HepG2 (cell line): ENCODE measurements at regions of chr4 and their contacts with region 1.

Region 1: DNA sequence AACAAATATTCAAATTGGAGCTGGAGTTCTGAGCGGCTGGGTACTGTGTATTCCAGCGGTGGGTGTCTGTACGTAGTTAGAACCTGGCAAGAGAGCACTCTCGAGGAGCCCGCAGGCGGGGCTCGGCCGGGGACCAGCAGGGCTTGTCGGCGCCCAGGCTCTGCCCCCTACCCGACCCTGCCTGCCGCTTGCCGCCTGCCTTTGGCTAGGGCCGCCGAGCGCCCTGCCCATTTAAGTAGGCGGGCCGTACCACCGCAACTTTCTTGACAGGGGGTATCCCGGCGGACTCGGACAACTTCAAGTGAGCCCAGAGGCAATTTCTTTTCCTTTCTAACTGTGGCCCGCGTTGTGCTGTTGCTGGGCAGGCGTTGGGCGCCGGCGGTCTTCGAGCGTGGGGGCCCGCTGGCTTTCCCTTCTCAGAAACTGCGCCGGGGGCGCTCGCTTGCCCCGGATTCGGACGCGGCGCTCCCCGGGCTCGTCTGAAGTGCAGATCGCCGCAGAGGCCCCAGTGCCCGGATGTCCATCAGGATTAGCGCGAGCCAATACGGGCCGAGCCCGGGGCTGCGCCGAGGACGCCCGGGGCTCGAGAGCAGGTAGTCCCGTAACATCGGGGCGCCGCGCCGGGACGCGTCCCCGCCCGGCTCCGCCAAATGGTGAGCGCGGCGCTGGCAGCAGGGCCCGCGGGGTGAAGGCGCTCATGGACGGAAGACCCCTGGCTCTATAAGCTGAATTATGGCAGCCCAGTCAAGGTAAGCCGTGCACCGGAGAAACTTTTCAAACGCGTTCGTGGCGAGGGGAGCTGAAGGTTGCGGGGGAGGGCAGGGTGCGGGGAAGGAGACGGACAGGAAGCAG is 72.1 kb downstream of the AFF1 start:
- DNase-seq: peak; percentile 84
- ATAC-seq: peak; percentile 96
- H3K4me3 ChIP-seq: peak overlapping the region; percentile 71 to 85 (median 74)
- H3K27ac ChIP-seq: peak overlapping the region; percentile 99
- H3K4me1 ChIP-seq: peaks cover 71% of the 10 kb centered on the region
- H3K27me3 ChIP-seq: no peaks in the 10 kb centered on the region; a peak in 1 of 5 replicates
- CTCF ChIP-seq: peak; percentile 21; the same call in 1 of the 2 replicates
- EP300 ChIP-seq: peak in 1 of 2 experiments; percentile 12; a peak in 1 of 4 replicates
- POLR2A ChIP-seq: peak; percentile 99
- RAD21 ChIP-seq: peak; percentile 59

Region 2: DNA sequence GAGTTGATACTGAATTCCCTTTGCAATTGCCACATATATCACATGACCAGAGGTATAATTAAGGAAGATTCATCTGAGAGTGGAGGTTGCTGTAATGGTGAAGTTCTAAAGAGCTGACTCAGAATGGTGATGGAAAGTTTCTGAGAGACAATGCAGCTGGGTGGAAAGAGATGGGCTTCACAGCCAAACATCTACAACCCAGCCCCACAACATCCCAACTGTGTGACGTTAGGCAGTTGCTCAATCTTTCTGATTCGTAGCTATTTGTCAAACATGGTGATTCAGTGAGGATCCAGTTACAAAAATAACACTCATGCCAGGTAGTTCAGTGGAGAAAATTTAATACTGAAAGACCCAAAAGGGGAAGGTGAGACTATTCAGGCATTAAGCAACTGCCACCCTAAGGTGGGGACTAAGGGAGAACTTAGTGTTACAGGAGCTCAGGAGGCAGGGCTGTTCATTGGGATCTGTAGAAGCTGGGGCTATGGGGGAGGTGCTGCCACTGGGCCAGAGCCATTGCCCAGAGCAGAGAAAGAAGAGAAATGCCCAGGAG is 79.0 kb before region 1 on chr4:
- CTCF ChIA-PET with region 1: interaction called, 5 read pairs
- POLR2A ChIA-PET with region 1: interaction called, 17 read pairs
- in situ Hi-C with region 1: no loop called
- intact Hi-C with region 1: no loop called
- DNase-seq: peak; percentile 87
- ATAC-seq: peak; percentile 74
- H3K4me3 ChIP-seq: no peak overlapping the region
- H3K27ac ChIP-seq: no peak overlapping the region
- H3K4me1 ChIP-seq: peaks cover 21% of the 10 kb centered on the region
- H3K27me3 ChIP-seq: no peaks in the 10 kb centered on the region
- CTCF ChIP-seq: no peak
- EP300 ChIP-seq: peak in 1 of 2 experiments; percentile 60; a peak in 1 of 4 replicates
- POLR2A ChIP-seq: no peak
- RAD21 ChIP-seq: no peak

Region 3: GRCh38 chr4:86942185-86942666 is 64.7 kb before region 1 on chr4:
- CTCF ChIA-PET with region 1: no interaction called
- POLR2A ChIA-PET with region 1: interaction called, 35 read pairs
- in situ Hi-C with region 1: loop called (anchors 5 kb)
- intact Hi-C with region 1: no loop called
- DNase-seq: peak; percentile 62
- ATAC-seq: peak; percentile 63
- H3K4me3 ChIP-seq: no peak overlapping the region
- H3K27ac ChIP-seq: peak overlapping the region; percentile 43
- H3K4me1 ChIP-seq: peaks cover 92% of the 10 kb centered on the region
- H3K27me3 ChIP-seq: no peaks in the 10 kb centered on the region
- CTCF ChIP-seq: no peak
- EP300 ChIP-seq: peak in 1 of 2 experiments; percentile 44; a peak in 1 of 4 replicates
- POLR2A ChIP-seq: no peak
- RAD21 ChIP-seq: no peak

Region 4: GRCh38 chr4:86977621-86978184 is 29.2 kb before region 1 on chr4:
- CTCF ChIA-PET with region 1: no interaction called
- POLR2A ChIA-PET with region 1: interaction called, 30 read pairs
- in situ Hi-C with region 1: no loop called
- intact Hi-C with region 1: loop called (anchors 1 kb)
- DNase-seq: peak; percentile 96
- ATAC-seq: peak; percentile 97
- H3K4me3 ChIP-seq: peak overlapping the region in 1 of 3 experiments; percentile 28; a peak in 1 of 6 replicates
- H3K27ac ChIP-seq: peak overlapping the region; percentile 94
- H3K4me1 ChIP-seq: peaks cover 75% of the 10 kb centered on the region
- H3K27me3 ChIP-seq: no peaks in the 10 kb centered on the region
- CTCF ChIP-seq: no peak
- EP300 ChIP-seq: peak in 1 of 2 experiments; percentile 90; a peak in 2 of 4 replicates
- POLR2A ChIP-seq: no peak
- RAD21 ChIP-seq: no peak

Region 5: GRCh38 chr4:87044511-87045233 is 37.8 kb after region 1 on chr4:
- CTCF ChIA-PET with region 1: no interaction called
- POLR2A ChIA-PET with region 1: no interaction called
- in situ Hi-C with region 1: no loop called
- intact Hi-C with region 1: no loop called
- DNase-seq: no peak
- ATAC-seq: no peak
- H3K4me3 ChIP-seq: no peak overlapping the region
- H3K27ac ChIP-seq: no peak overlapping the region
- H3K4me1 ChIP-seq: peaks cover 31% of the 10 kb centered on the region
- H3K27me3 ChIP-seq: no peaks in the 10 kb centered on the region
- CTCF ChIP-seq: no peak
- EP300 ChIP-seq: no peak
- POLR2A ChIP-seq: no peak
- RAD21 ChIP-seq: no peak

Region 6: GRCh38 chr4:87093443-87094123 is 86.7 kb after region 1 on chr4:
- CTCF ChIA-PET with region 1: no interaction called
- POLR2A ChIA-PET with region 1: interaction called, 17 read pairs
- in situ Hi-C with region 1: no loop called
- intact Hi-C with region 1: loop called (anchors 1 kb)
- DNase-seq: peak; percentile 56
- ATAC-seq: peak; percentile 83
- H3K4me3 ChIP-seq: no peak overlapping the region
- H3K27ac ChIP-seq: no peak overlapping the region
- H3K4me1 ChIP-seq: peaks cover 42% of the 10 kb centered on the region
- H3K27me3 ChIP-seq: no peaks in the 10 kb centered on the region
- CTCF ChIP-seq: peak; percentile 79
- EP300 ChIP-seq: no peak
- POLR2A ChIP-seq: no peak
- RAD21 ChIP-seq: peak; percentile 56; the same call in 1 of the 2 replicates